ENCODE measurements at regions of chr3 and their contacts with region 1.

Region 1: DNA sequence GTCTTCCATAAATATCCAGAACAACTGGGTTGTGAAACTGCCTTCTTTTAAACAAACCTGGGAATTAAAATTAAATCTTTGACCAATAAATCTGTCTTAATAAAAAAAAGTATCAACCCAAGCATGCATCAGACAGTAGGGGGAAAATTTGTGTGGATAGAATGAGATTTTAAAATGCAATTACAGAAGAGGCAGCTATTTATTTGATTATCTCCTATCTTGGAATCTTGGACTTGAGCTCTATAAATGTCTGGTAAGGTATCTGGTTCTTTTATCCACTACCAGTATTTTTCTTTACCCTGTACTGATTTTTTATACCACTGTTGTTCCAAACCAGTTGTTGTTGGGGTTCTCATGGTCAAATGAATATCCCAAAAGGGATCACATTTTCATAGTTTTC is 157.6 kb upstream of the VEPH1 start:
- DNase-seq: no peak
- H3K4me3 ChIP-seq: no peak overlapping the region
- H3K27ac ChIP-seq: peak overlapping the region in 5 of 59 donors; percentile 70 to 89 (median 83)
- H3K27me3 ChIP-seq: peaks cover 0 to 4% (median 0%) of the 10 kb centered on the region in 45 donors
- CTCF ChIP-seq: no peak

Region 2: GRCh38 chr3:157705258-157705657 is 44.4 kb after region 1 on chr3:
- intact Hi-C with region 1: loop called in 1 of 2 experiments (anchors 2 kb)
- DNase-seq: no peak
- H3K4me3 ChIP-seq: no peak overlapping the region
- H3K27ac ChIP-seq: no peak overlapping the region
- H3K27me3 ChIP-seq: peaks cover 0 to 3% (median 0%) of the 10 kb centered on the region in 45 donors
- CTCF ChIP-seq: no peak

Measured in dorsolateral prefrontal cortex (tissue), 120 donors.